Endothelial cell of umbilical vein (primary cell): ENCODE measurements at regions of chr1 and their contacts with region 1.

Region 1: DNA sequence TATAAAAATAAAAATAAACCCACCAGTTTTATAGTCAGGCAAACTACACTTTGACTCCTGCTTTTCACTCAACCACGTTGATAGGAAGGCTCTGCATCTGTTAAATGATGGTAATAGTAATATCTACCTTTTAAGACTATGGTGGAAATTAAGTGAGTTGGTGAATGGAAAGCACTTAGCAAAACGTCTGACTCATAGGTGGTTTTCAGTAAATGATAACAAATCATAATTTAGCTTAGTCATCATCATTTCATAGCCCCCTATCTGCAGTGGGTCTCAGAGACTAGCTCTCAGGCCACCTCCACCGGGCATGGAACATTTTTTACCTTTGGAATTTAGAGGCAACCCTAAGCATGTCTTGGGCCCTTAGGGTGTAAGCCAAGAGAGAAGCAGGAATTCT is 160.0 kb downstream of the PDE4B start:
- DNase-seq: peak; percentile 42
- H3K4me3 ChIP-seq: no peak overlapping the region
- H3K27ac ChIP-seq: peak overlapping the region; percentile 67
- H3K4me1 ChIP-seq: peaks cover 17% of the 10 kb centered on the region
- H3K27me3 ChIP-seq: no peaks in the 10 kb centered on the region
- CTCF ChIP-seq: no peak
- POLR2A ChIP-seq: no peak

Region 2: GRCh38 chr1:65717815-65718454 is 234.8 kb before region 1 on chr1:
- CTCF ChIA-PET with region 1: interaction called, 4 read pairs
- POLR2A ChIA-PET with region 1: no interaction called
- dilution Hi-C with region 1: no loop called
- intact Hi-C with region 1: loop called (anchors 5 kb)
- DNase-seq: peak; percentile 36
- H3K4me3 ChIP-seq: no peak overlapping the region
- H3K27ac ChIP-seq: no peak overlapping the region
- H3K4me1 ChIP-seq: no peaks in the 10 kb centered on the region
- H3K27me3 ChIP-seq: peaks cover 0 to 3% of the 10 kb centered on the region in 2 experiments
- CTCF ChIP-seq: peak in 1 of 2 donors; percentile 5
- POLR2A ChIP-seq: no peak

Region 3: DNA sequence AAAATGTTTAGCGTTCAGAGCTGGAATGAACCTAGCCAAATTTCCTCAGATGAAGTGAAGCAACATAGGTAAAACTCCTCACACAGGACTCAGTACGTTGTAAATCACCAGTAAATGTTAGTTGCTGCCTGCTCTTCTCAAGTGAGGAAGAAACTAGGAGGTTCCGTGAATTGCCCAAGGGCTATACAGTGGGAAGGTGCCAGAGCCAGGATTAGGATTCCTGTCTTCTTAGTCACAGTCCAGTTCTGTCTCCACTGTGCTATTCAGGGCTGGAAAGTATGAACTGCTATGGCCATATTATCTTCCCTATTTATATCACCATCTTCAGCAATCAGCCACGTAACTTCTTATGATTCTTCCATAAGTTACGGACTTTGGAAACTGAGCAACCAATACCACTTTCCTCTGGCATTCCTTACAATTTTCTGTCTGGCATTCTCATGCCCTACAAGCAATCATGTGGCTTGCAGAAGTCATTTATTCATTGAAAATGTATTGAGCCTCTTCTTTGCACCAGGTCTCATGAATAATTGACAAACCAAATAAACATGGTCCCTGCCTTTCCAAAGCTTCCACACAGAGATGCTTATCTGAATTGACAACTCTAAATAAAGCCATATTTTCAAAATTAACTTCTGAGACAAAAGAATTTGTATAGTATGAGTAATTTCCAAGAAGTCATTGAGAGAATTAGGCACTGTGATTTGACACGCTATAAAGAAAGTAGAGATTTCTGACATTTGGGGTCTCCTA is 309.7 kb after region 1 on chr1:
- CTCF ChIA-PET with region 1: no interaction called
- POLR2A ChIA-PET with region 1: no interaction called
- dilution Hi-C with region 1: no loop called
- intact Hi-C with region 1: no loop called
- DNase-seq: no peak
- H3K4me3 ChIP-seq: no peak overlapping the region
- H3K27ac ChIP-seq: no peak overlapping the region
- H3K4me1 ChIP-seq: peaks cover 57% of the 10 kb centered on the region
- H3K27me3 ChIP-seq: no peaks in the 10 kb centered on the region
- CTCF ChIP-seq: no peak
- POLR2A ChIP-seq: no peak

Region 4: GRCh38 chr1:67855961-67856360 is 1903.3 kb after region 1 on chr1:
- CTCF ChIA-PET with region 1: no interaction called
- POLR2A ChIA-PET with region 1: no interaction called
- dilution Hi-C with region 1: no loop called
- intact Hi-C with region 1: no loop called
- DNase-seq: peak; percentile 83
- H3K4me3 ChIP-seq: peak overlapping the region in 1 of 3 experiments; percentile 47
- H3K27ac ChIP-seq: peak overlapping the region; percentile 79
- H3K4me1 ChIP-seq: peaks cover 34% of the 10 kb centered on the region
- H3K27me3 ChIP-seq: no peaks in the 10 kb centered on the region
- CTCF ChIP-seq: no peak
- POLR2A ChIP-seq: no peak